AG04450 (cell line): ENCODE measurements at regions of chr9 and their contacts with region 1.

Region 1: DNA sequence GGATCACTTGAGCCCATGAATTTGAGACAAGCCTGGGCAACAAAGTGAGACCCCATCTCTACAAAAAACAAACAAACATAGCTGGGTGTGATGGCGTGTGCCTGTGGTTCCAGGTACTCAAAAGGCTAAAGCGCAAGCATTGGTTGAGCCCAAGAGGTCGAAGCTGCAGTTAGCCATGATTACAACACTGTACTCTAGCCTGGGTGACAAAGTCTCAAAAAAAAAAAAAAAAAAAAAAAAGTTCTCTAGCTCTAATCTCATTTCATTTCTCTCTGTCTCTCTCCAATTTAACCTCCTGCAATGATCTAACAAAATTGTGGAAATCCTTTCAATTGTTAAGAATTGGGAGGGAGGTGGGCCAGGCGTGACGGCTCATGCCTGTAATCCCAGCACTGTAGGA is 33.3 kb downstream of the LPAR1 start:
- DNase-seq: no peak
- H3K4me3 ChIP-seq: no peak overlapping the region
- H3K27ac ChIP-seq: no peak overlapping the region
- H3K27me3 ChIP-seq: no peaks in the 10 kb centered on the region
- CTCF ChIP-seq: no peak

Region 2: DNA sequence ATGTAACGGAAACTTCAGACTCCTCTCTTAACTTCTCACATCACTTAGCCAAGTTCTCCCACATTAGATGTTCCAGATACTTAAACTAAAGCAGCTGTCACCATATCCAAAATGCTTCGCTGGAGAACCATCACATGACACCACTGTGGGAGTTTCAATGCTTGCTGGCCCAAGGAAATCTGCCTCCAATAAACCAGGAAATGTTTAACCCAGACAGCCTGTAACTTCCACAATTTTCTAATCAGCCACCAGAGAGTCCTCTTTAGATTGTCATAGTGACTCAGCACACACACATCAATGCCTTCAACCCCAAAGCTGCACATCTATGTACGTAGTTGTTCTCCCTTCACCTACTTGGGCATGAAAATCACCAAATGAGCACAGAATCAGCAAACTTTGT is 85.3 kb before region 1 on chr9:
- CTCF ChIA-PET with region 1: no interaction called
- POLR2A ChIA-PET with region 1: interaction called, 12 read pairs
- DNase-seq: no peak
- H3K4me3 ChIP-seq: no peak overlapping the region
- H3K27ac ChIP-seq: peak overlapping the region; percentile 82
- H3K27me3 ChIP-seq: no peaks in the 10 kb centered on the region
- CTCF ChIP-seq: no peak

Region 3: GRCh38 chr9:110986529-110986928 is 18.4 kb before region 1 on chr9:
- CTCF ChIA-PET with region 1: no interaction called
- POLR2A ChIA-PET with region 1: no interaction called
- DNase-seq: no peak
- H3K4me3 ChIP-seq: no peak overlapping the region
- H3K27ac ChIP-seq: no peak overlapping the region
- H3K27me3 ChIP-seq: no peaks in the 10 kb centered on the region
- CTCF ChIP-seq: no peak